ENCODE measurements at regions of chr4 and their contacts with region 1.

Region 1: DNA sequence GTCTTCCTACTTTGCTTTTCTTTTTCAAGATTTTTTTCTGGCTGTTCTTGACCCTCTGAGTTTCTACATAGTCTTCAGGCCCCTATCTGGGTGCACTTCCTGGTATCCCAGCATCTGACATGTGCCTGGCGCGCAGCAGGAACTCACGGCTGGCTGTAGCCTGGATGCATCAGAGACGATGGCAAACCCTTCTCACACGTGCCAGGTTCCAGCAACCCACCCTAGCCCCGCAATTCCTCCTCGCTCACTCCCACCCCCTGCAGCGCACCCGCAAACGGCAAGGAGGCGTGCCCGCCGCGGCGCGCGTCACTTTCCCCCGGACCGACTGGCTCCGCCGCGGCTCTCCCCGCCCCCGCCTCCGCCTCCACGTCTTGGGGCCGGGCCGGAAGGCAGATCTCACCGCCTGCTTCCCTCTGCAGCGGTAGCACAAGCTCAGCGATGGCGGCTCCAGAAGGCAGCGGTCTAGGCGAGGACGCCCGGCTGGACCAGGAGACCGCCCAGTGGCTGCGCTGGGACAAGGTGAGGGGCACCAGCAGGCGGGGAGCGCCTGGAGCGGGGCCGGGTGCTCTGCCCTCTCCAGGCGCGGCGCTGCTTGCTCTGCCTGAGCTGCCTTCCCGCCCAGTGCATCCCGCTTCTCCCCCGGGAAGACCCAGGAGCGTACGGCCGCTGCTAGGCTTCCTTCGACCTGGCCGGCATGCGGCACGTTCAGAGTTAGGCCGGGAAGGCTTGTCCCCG is at the start of gene PGM2:
- DNase-seq: peak; percentile 95
- ATAC-seq: peak; percentile 96
- H3K4me3 Mint-ChIP-seq: peak within 1 kb of the TSS; percentile 97
- H3K27ac Mint-ChIP-seq: peak within 1 kb of the TSS; percentile 93
- H3K4me1 Mint-ChIP-seq: peaks cover 29% of the 10 kb centered on the region
- H3K27me3 Mint-ChIP-seq: no peaks in the 10 kb centered on the region
- total RNA-seq, gene PGM2: 54.1 to 60.1 TPM

Region 2: DNA sequence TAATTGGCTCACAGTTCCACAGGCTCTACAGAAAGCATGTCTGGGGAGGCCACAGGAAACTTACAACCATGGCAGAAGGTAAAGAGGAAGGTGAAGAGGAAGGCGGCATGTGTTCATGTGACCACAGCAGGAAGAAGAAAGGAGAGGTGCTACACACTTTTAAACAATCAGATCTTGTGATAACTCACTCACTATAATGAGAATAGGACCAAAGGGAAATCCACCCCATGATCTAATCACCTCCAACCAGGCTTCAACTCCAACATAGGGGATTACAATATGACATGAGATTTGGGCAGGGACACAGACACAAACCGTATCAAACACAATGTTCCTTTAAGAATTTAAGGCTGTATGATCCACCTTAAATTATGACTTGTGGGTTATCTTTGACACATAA is 10.5 kb before region 1 on chr4:
- CTCF ChIA-PET with region 1: no interaction called
- POLR2A ChIA-PET with region 1: no interaction called
- intact Hi-C with region 1: loop called in 1 of 2 experiments (anchors 1 kb)
- DNase-seq: no peak
- ATAC-seq: peak; percentile 74
- H3K4me3 Mint-ChIP-seq: peak overlapping the region; percentile 24
- H3K27ac Mint-ChIP-seq: peak overlapping the region; percentile 91
- H3K4me1 Mint-ChIP-seq: peaks cover 18% of the 10 kb centered on the region
- H3K27me3 Mint-ChIP-seq: no peaks in the 10 kb centered on the region

Region 3: GRCh38 chr4:37891260-37892159 is 65.0 kb after region 1 on chr4:
- CTCF ChIA-PET with region 1: no interaction called
- POLR2A ChIA-PET with region 1: interaction called, 4 read pairs
- intact Hi-C with region 1: loop called (anchors 1 kb)
- DNase-seq: peak; percentile 73
- ATAC-seq: peak; percentile 78
- H3K4me3 Mint-ChIP-seq: peak overlapping the region; percentile 78
- H3K27ac Mint-ChIP-seq: peak overlapping the region; percentile 93
- H3K4me1 Mint-ChIP-seq: peaks cover 35% of the 10 kb centered on the region
- H3K27me3 Mint-ChIP-seq: peaks cover 3% of the 10 kb centered on the region

Region 4: DNA sequence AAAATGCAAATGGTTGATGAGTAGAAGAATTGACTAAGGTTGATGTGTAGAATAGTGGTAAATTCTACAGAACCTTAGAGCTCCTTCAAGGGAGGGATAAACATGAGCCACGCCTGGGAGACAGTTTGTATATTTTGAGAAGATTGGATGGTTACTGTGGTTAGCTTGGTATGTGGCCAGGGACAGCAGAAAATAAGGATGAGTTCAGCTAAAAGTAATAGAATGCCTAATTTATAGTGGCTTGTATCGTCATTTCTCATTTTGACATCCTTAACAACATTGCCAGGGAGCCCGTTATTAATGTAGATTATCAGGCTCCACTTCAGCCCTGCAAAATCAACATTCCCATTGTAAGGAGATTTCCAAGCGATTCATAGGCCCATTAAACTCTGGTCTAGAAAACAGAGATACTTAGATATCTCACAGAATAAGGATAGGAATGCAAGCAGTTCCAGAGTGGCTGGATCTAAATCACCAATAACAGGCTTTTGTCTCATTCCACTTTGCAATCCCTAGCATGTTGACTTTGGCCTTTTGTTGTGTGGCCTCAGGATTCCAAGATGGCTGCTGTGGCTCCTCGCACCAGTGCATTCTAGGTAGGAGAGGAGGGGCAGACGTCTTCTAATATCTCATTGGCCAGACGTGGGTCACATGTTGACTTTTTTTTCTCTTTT is 127.3 kb after region 1 on chr4:
- CTCF ChIA-PET with region 1: no interaction called
- POLR2A ChIA-PET with region 1: no interaction called
- intact Hi-C with region 1: loop called in 1 of 2 experiments (anchors 1 kb)
- DNase-seq: peak; percentile 25
- ATAC-seq: peak; percentile 57
- H3K4me3 Mint-ChIP-seq: no peak overlapping the region
- H3K27ac Mint-ChIP-seq: no peak overlapping the region
- H3K4me1 Mint-ChIP-seq: peaks cover 15% of the 10 kb centered on the region
- H3K27me3 Mint-ChIP-seq: no peaks in the 10 kb centered on the region